Naive thymus-derived CD4-positive, alpha-beta T cell (primary cell): ENCODE measurements at regions of chr20 and their contacts with region 1.

Region 1: DNA sequence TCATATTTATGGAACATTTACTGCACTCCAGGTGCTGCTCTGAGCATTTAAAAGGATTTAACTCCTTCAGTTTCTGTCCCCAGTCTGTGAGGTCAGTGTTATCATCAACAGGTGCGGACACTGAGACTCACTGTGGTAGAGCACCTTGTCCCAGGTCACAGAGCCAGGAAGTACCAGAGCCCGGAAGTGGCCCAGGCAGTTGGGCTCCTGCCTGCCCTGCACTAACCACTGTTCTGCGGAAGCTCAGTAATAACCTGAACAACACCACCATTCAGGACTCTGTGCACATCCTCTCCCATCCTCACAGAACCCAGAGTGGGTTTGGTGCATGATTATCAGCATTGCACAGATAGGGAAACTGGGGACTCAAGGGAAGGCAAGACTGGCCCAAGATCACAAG is 16.8 kb upstream of the SIRPG start:
- DNase-seq: peak in 5 of 9 donors; percentile 34 to 55 (median 36)
- ATAC-seq: peak; percentile 76
- H3K4me3 ChIP-seq: peak overlapping the region; percentile 28
- H3K4me3 Mint-ChIP-seq: peak overlapping the region; percentile 55 to 87 (median 78)
- H3K27ac ChIP-seq: peak overlapping the region; percentile 68
- H3K27ac Mint-ChIP-seq: peak overlapping the region; percentile 80 to 97 (median 92)
- H3K4me1 ChIP-seq: peaks cover 67 to 84% of the 10 kb centered on the region in 2 donors
- H3K4me1 Mint-ChIP-seq: peaks cover 58 to 100% (median 98%) of the 10 kb centered on the region in 7 donors
- H3K27me3 ChIP-seq: no peaks in the 10 kb centered on the region
- H3K27me3 Mint-ChIP-seq: no peaks in the 10 kb centered on the region

Region 2: GRCh38 chr20:1509237-1509636 is 165.1 kb before region 1 on chr20:
- CTCF ChIA-PET with region 1: no interaction called
- POLR2A ChIA-PET with region 1: no interaction called
- intact Hi-C with region 1: no loop called
- DNase-seq: peak in 7 of 9 donors; percentile 4 to 48 (median 34)
- ATAC-seq: peak; percentile 81
- H3K4me3 ChIP-seq: no peak overlapping the region
- H3K4me3 Mint-ChIP-seq: no peak overlapping the region
- H3K27ac ChIP-seq: no peak overlapping the region
- H3K27ac Mint-ChIP-seq: no peak overlapping the region
- H3K4me1 ChIP-seq: no peaks in the 10 kb centered on the region
- H3K4me1 Mint-ChIP-seq: no peaks in the 10 kb centered on the region
- H3K27me3 ChIP-seq: no peaks in the 10 kb centered on the region
- H3K27me3 Mint-ChIP-seq: peaks cover 0 to 42% (median 7%) of the 10 kb centered on the region in 5 donors

Region 3: DNA sequence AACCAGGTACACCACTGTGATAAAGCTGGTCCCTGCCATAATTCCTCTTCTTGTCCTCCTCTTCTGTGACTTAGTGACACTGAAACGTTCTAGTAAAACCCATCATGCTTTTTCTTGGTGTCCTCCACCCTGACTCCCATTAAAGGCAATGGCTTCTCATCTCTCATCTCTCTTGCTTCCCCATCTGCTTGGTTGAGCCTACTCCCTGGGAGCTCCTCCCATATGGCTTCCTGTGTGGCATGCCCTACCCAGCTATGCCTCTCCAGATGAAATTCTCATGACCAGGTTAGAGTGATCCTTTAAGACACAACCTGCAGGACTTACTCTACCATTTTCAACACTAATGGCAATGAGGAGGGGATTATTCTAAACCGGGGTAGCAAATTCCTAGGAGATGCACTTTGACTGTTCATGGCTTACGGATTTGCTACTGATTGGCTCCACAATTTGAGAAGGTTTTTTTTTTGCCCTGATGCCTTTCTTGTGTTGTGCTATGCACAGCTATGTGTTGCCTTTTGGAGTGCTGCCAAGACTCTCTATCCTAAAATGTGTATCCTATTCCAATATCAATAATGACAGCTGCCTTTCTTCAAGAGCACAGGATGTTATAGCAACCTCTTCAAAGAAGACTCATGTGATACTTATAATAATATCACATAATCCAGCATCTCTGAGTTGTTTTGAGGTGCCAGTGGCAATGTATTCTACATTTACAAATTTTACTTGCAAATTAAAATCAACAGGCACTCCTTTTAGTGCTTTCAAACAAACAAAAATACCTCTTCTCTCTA is 22.9 kb before region 1 on chr20:
- CTCF ChIA-PET with region 1: interaction called, 5 read pairs
- POLR2A ChIA-PET with region 1: interaction called, 171 read pairs
- intact Hi-C with region 1: no loop called
- DNase-seq: no peak
- ATAC-seq: no peak
- H3K4me3 ChIP-seq: peak overlapping the region; percentile 8
- H3K4me3 Mint-ChIP-seq: peak overlapping the region; percentile 46 to 88 (median 74)
- H3K27ac ChIP-seq: peak overlapping the region; percentile 41
- H3K27ac Mint-ChIP-seq: peak overlapping the region in 8 of 9 donors; percentile 33 to 93 (median 88)
- H3K4me1 ChIP-seq: peaks cover 56 to 66% of the 10 kb centered on the region in 2 donors
- H3K4me1 Mint-ChIP-seq: peaks cover 27 to 95% (median 86%) of the 10 kb centered on the region in 7 donors
- H3K27me3 ChIP-seq: no peaks in the 10 kb centered on the region
- H3K27me3 Mint-ChIP-seq: no peaks in the 10 kb centered on the region